BJ (cell line): ENCODE measurements at regions of chr3 and their contacts with region 1.

Region 1: GRCh38 chr3:10334459-10334858 is 13.5 kb upstream of the SEC13 start:
- DNase-seq: no peak
- H3K4me3 ChIP-seq: no peak overlapping the region
- H3K27me3 ChIP-seq: peaks cover 11% of the 10 kb centered on the region
- CTCF ChIP-seq: peak; percentile 34; the same call in 1 of the 2 replicates

Region 2: GRCh38 chr3:10322352-10322710 is 12.1 kb before region 1 on chr3:
- CTCF ChIA-PET with region 1: interaction called, 14 read pairs
- POLR2A ChIA-PET with region 1: no interaction called
- DNase-seq: no peak
- H3K4me3 ChIP-seq: no peak overlapping the region
- H3K27me3 ChIP-seq: peaks cover 5% of the 10 kb centered on the region
- CTCF ChIP-seq: peak; percentile 39

Region 3: DNA sequence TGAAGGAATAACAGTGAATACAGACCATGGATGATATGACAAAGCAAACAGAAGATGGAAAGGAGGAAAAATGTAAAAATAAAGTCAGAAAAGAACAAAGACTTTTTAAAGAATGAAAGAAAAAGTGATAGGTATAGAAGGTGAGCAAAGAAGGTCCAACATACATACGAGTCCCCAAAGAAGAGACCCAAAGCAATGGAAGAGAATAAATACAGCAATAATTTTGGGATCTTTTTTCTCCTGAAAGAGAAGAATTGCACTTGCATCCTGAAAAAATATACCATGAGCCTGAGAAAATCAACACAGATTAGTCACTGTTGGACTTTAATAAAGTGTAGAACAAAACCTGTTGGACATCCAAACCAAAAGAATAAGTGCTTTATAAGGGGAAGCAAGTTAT is 572.8 kb after region 1 on chr3:
- CTCF ChIA-PET with region 1: no interaction called
- POLR2A ChIA-PET with region 1: no interaction called
- DNase-seq: no peak
- H3K4me3 ChIP-seq: no peak overlapping the region
- H3K27me3 ChIP-seq: no peaks in the 10 kb centered on the region
- CTCF ChIP-seq: no peak